ENCODE measurements at regions of chr18 and their contacts with region 1.

Region 1: DNA sequence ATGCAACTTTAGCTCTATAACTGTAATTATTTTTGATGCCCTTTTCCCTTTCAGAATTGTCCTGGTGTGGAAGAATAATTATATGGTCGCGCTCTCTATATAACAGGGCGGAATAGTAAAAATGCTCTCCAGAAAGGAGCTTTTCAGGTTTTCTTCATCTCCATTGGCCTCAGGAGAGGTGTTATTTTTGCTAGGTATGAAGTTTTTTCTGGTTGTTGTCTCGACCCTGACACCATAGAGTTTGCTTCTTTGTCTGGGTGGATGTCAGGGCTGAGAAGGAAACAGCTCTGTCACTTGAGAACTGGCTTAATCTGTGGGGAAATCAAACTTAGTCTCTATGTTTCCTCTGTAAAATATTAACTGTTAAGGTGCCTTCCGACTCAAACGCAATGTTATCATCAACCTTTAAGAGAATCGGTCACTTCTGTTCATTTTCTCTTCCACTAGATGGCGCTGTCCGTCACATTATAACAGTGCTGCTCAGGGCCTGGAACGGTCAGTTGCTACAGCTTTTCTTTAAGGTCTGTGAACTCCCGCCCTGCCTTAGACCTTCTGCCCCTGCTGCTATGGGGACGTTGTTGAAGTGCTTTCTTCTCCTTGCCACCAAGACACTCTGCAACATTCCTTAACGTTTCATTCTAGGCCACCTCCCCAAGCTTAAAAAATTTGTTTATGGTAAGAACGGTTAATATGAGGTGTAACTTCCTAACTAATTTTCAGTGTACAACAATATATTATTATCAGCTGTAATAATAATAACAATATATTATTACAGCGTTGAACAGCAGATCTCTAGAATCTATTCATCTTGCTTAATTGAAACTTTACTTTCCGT is 23.8 kb upstream of the SERPINB12 start:
- DNase-seq: peak; percentile 39 to 60
- H3K4me3 ChIP-seq: no peak overlapping the region
- H3K27ac ChIP-seq: no peak overlapping the region
- H3K4me1 ChIP-seq: peaks cover 2 to 14% (median 6%) of the 10 kb centered on the region in 4 experiments; a peak in 4 of 7 replicates
- H3K27me3 ChIP-seq: no peaks in the 10 kb centered on the region
- CTCF ChIP-seq: peak in 2 of 3 experiments; percentile 80 to 86; a peak in 3 of 4 replicates
- EP300 ChIP-seq: peak in 1 of 2 experiments; percentile 32; a peak in 1 of 3 replicates
- POLR2A ChIP-seq: no peak
- RAD21 ChIP-seq: peak; percentile 93 to 97

Region 2: GRCh38 chr18:63267975-63268721 is 250.2 kb before region 1 on chr18:
- CTCF ChIA-PET with region 1: no interaction called
- POLR2A ChIA-PET with region 1: no interaction called
- DNase-seq: no peak
- H3K4me3 ChIP-seq: no peak overlapping the region
- H3K27ac ChIP-seq: no peak overlapping the region
- H3K4me1 ChIP-seq: peaks cover 0 to 6% (median 0%) of the 10 kb centered on the region in 4 experiments; a peak in 1 of 7 replicates
- H3K27me3 ChIP-seq: no peaks in the 10 kb centered on the region
- CTCF ChIP-seq: no peak
- EP300 ChIP-seq: no peak
- POLR2A ChIP-seq: no peak
- RAD21 ChIP-seq: no peak

Region 3: GRCh38 chr18:63378919-63379638 is 139.3 kb before region 1 on chr18:
- CTCF ChIA-PET with region 1: no interaction called
- POLR2A ChIA-PET with region 1: no interaction called
- DNase-seq: no peak
- H3K4me3 ChIP-seq: no peak overlapping the region
- H3K27ac ChIP-seq: no peak overlapping the region
- H3K4me1 ChIP-seq: no peaks in the 10 kb centered on the region
- H3K27me3 ChIP-seq: no peaks in the 10 kb centered on the region
- CTCF ChIP-seq: no peak
- EP300 ChIP-seq: no peak
- POLR2A ChIP-seq: no peak
- RAD21 ChIP-seq: no peak

Region 4: GRCh38 chr18:63467699-63468098 is 50.7 kb before region 1 on chr18:
- CTCF ChIA-PET with region 1: no interaction called
- POLR2A ChIA-PET with region 1: no interaction called
- DNase-seq: no peak
- H3K4me3 ChIP-seq: no peak overlapping the region
- H3K27ac ChIP-seq: no peak overlapping the region
- H3K4me1 ChIP-seq: no peaks in the 10 kb centered on the region
- H3K27me3 ChIP-seq: peaks cover 0 to 1% (median 0%) of the 10 kb centered on the region in 4 experiments; a peak in 2 of 7 replicates
- CTCF ChIP-seq: no peak
- EP300 ChIP-seq: no peak
- POLR2A ChIP-seq: no peak
- RAD21 ChIP-seq: no peak

Region 5: DNA sequence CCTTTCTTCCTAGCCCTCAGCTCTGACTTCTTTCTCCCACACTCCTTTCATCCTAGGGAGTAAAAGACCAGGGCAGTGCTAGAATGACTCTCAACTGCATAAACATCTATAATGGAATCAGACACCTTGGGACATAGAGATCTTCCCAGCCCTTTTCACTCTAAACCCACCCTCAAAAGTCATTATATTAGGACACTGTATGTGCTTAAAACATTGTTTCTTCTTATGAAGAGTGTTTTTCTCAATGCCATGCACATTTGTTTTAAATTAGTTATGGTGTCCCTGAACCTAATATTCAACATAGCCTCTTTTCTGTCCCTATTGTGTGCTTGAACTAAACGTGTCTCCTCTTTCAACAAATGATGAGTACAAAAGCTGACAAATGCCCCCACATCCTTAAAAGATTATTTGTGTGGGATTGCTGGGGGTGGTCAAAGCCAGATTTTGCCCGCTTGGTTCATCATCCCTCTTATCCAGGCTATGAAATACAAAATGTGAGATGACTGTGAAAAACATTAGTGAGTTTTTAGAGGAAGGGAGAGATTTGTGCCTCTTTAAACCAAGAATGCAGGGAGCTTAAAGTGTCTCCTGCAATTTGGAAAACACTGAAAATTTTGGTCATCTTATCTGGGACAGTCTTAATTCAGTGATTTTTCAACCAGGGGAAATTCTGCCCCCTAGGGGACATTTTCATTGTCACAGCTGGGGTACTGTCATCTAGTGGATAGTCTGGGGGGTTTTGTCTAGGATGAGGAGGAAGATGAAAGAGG is 12.6 kb before region 1 on chr18:
- CTCF ChIA-PET with region 1: interaction called, 18 read pairs
- POLR2A ChIA-PET with region 1: no interaction called
- DNase-seq: peak in 1 of 2 experiments; percentile 81
- H3K4me3 ChIP-seq: no peak overlapping the region
- H3K27ac ChIP-seq: no peak overlapping the region
- H3K4me1 ChIP-seq: no peaks in the 10 kb centered on the region; a peak in 1 of 7 replicates
- H3K27me3 ChIP-seq: no peaks in the 10 kb centered on the region
- CTCF ChIP-seq: peak in 2 of 3 experiments; percentile 66 to 88; a peak in 3 of 4 replicates
- EP300 ChIP-seq: no peak
- POLR2A ChIP-seq: no peak
- RAD21 ChIP-seq: peak; percentile 59 to 70

Region 6: GRCh38 chr18:63539904-63540510 is 21.6 kb after region 1 on chr18:
- CTCF ChIA-PET with region 1: interaction called, 12 read pairs
- POLR2A ChIA-PET with region 1: no interaction called
- DNase-seq: no peak
- H3K4me3 ChIP-seq: no peak overlapping the region
- H3K27ac ChIP-seq: no peak overlapping the region
- H3K4me1 ChIP-seq: peaks cover 0 to 6% (median 0%) of the 10 kb centered on the region in 4 experiments; a peak in 1 of 7 replicates
- H3K27me3 ChIP-seq: no peaks in the 10 kb centered on the region; a peak in 1 of 7 replicates
- CTCF ChIP-seq: no peak
- EP300 ChIP-seq: no peak
- POLR2A ChIP-seq: no peak
- RAD21 ChIP-seq: no peak

Region 7: DNA sequence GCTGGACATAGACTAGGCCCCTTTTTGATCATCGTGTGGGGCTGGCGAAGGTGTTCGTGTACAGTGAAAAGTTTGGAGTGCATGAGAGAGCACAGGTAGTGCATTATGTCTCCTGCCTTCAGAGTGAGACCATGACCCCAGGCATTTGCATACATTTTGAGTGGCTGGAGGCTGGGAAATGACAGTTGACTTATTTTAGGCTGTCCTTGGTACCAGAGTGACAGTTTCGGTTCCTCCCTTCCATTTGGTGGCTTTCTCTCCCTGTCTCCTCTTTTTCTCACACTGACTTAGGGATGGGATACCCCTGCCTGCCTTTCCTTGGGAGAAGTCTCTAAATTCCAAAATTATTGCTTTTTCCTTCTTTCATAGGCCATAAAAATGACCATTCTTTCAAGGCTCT is 43.9 kb after region 1 on chr18:
- CTCF ChIA-PET with region 1: interaction called, 64 read pairs
- POLR2A ChIA-PET with region 1: no interaction called
- DNase-seq: no peak
- H3K4me3 ChIP-seq: no peak overlapping the region
- H3K27ac ChIP-seq: no peak overlapping the region
- H3K4me1 ChIP-seq: no peaks in the 10 kb centered on the region
- H3K27me3 ChIP-seq: no peaks in the 10 kb centered on the region
- CTCF ChIP-seq: no peak
- EP300 ChIP-seq: no peak
- POLR2A ChIP-seq: no peak
- RAD21 ChIP-seq: no peak

Region 8: GRCh38 chr18:63741769-63742168 is 223.4 kb after region 1 on chr18:
- CTCF ChIA-PET with region 1: interaction called, 109 read pairs
- POLR2A ChIA-PET with region 1: no interaction called
- DNase-seq: no peak
- H3K4me3 ChIP-seq: no peak overlapping the region
- H3K27ac ChIP-seq: no peak overlapping the region
- H3K4me1 ChIP-seq: no peaks in the 10 kb centered on the region; a peak in 1 of 7 replicates
- H3K27me3 ChIP-seq: no peaks in the 10 kb centered on the region
- CTCF ChIP-seq: peak in 2 of 3 experiments; percentile 28 to 45; a peak in 2 of 4 replicates
- EP300 ChIP-seq: no peak
- POLR2A ChIP-seq: no peak
- RAD21 ChIP-seq: peak; percentile 66

Region 9: GRCh38 chr18:63837556-63837955 is 319.2 kb after region 1 on chr18:
- CTCF ChIA-PET with region 1: interaction called, 73 read pairs
- POLR2A ChIA-PET with region 1: no interaction called
- DNase-seq: no peak
- H3K4me3 ChIP-seq: no peak overlapping the region
- H3K27ac ChIP-seq: no peak overlapping the region
- H3K4me1 ChIP-seq: no peaks in the 10 kb centered on the region
- H3K27me3 ChIP-seq: no peaks in the 10 kb centered on the region
- CTCF ChIP-seq: no peak
- EP300 ChIP-seq: no peak
- POLR2A ChIP-seq: no peak
- RAD21 ChIP-seq: no peak

Region 10: DNA sequence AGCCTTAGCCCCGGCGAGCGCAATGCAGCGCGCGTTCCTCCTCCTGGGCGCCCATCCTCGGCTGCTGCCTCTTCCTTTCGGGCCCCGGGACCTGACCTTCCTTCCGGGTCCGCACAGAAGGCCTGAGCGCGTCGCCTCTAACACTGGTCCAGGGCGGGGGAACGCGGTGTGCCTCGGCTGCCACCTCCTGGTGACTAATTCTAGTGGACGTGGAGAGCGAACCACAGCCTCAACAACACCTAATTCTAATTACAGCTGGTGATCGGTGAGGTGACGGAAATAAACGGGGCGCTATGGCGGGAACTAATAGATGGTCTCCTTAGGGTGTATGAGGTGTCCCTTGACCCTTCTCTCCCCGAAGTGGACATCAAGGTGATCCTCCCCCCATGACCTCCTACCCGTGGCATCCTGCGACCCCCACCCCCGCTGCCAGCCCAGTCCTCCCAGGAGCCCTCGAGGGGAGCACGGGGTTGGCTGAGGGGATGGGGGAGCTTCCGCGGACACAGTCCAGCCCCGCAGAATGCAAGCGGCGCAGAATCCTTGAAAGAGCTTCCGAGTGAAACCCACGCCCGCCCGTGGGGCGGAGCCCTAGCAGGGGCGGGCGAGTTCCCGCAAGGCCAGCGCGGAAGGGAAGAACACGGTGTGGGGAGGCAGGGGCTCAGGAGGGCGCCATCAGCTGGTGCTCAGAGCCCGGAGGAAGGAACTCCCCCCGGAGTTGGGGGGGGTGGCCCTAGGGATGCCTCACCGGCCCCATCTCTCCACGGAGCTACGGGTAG is 417.9 kb after region 1 on chr18:
- CTCF ChIA-PET with region 1: interaction called, 15 read pairs
- POLR2A ChIA-PET with region 1: no interaction called
- DNase-seq: peak; percentile 70 to 88
- H3K4me3 ChIP-seq: peak overlapping the region; percentile 41 to 74 (median 56)
- H3K27ac ChIP-seq: no peak overlapping the region
- H3K4me1 ChIP-seq: 0 out of 7 replicates have a peak, but pooled peaks cover 0 to 3% (median 0%) of the 10 kb centered on the region in 4 experiments
- H3K27me3 ChIP-seq: peaks cover 3 to 19% (median 13%) of the 10 kb centered on the region in 4 experiments
- CTCF ChIP-seq: peak; percentile 77 to 82 (median 80)
- EP300 ChIP-seq: no peak
- POLR2A ChIP-seq: no peak
- RAD21 ChIP-seq: peak; percentile 83

Measured in H1 (cell line).